ENCODE measurements at regions of chr21 and their contacts with region 1.

Region 1: DNA sequence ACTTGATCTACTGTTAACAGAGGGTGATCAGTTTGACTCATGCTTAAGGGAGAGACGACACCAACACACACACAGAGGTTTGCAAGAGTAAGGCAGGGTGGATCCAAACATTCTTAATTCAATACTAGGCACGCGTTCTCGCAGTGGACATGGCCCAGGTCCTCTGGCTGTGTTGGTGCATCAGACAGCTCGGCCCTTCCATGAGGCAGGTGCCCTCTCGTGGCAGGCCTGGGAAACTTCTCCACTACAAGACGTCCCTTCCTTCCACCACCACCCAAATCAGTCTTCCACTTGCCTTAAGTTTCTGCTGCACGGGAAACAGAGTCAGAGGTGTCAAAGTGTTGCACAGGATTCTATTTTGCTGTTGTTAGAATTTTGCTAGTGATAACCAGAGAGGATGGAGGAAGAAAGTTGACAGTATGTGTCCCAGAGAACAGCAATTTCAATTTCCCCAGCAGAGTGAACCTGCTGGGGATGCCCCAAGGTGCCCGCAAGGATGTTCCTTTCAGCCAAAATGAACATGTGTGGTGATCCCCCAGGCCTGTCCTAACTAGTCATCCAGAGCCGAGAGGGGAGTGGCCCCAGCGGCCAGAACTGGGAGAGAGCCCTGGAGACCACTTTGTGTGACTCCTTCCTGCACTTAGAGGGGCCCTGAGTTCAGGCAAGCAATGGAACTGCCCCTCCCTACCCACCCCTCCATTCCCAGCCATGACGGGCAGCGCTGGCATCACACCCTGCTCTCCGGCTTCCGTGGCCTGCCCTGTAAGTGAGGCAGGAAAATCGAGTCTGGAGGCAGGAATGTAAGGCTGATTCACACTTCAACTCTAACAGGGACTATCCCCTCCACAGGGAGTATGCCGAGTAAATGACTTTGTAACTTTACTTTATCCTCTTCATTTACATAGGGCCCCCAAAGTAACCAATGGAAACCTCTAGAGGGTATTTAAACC is 34.8 kb downstream of the MX1 start:
- DNase-seq: peak; percentile 79
- H3K4me3 ChIP-seq: no peak overlapping the region
- H3K27ac ChIP-seq: no peak overlapping the region
- H3K4me1 ChIP-seq: no peaks in the 10 kb centered on the region
- H3K27me3 ChIP-seq: no peaks in the 10 kb centered on the region
- CTCF ChIP-seq: peak; percentile 74 to 91 (median 77)
- EP300 ChIP-seq: no peak
- POLR2A ChIP-seq: no peak

Region 2: GRCh38 chr21:41167348-41168342 is 293.2 kb before region 1 on chr21 and contains the start of gene BACE2:
- in situ Hi-C with region 1: loop called in 1 of 4 experiments (anchors 25 kb)
- intact Hi-C with region 1: no loop called
- DNase-seq: peak; percentile 87
- H3K4me3 ChIP-seq: peak within 1 kb of the TSS; percentile 74 to 95 (median 92)
- H3K27ac ChIP-seq: peak within 1 kb of the TSS; percentile 85 to 94 (median 92)
- H3K4me1 ChIP-seq: peaks cover 6 to 42% (median 15%) of the 10 kb centered on the region in 4 donors
- H3K27me3 ChIP-seq: no peaks in the 10 kb centered on the region
- CTCF ChIP-seq: peak in 4 of 5 experiments; percentile 46 to 77 (median 56)
- EP300 ChIP-seq: no peak
- POLR2A ChIP-seq: peak; percentile 49
- total RNA-seq, gene BACE2: 28.4 to 52.5 (median 43.9) TPM

Region 3: GRCh38 chr21:41283211-41283818 is 177.5 kb before region 1 on chr21:
- in situ Hi-C with region 1: loop called (anchors 5 to 25 kb)
- intact Hi-C with region 1: loop called (anchors 1 kb)
- DNase-seq: peak; percentile 50
- H3K4me3 ChIP-seq: no peak overlapping the region
- H3K27ac ChIP-seq: no peak overlapping the region
- H3K4me1 ChIP-seq: no peaks in the 10 kb centered on the region
- H3K27me3 ChIP-seq: peaks cover 15% of the 10 kb centered on the region
- CTCF ChIP-seq: peak; percentile 69 to 87 (median 77)
- EP300 ChIP-seq: no peak
- POLR2A ChIP-seq: no peak

Region 4: GRCh38 chr21:41289426-41289825 is 171.4 kb before region 1 on chr21:
- in situ Hi-C with region 1: loop called (anchors 5 to 25 kb)
- intact Hi-C with region 1: no loop called
- DNase-seq: no peak
- H3K4me3 ChIP-seq: no peak overlapping the region
- H3K27ac ChIP-seq: no peak overlapping the region
- H3K4me1 ChIP-seq: no peaks in the 10 kb centered on the region
- H3K27me3 ChIP-seq: peaks cover 45% of the 10 kb centered on the region
- CTCF ChIP-seq: no peak
- EP300 ChIP-seq: no peak
- POLR2A ChIP-seq: no peak